Esophagus squamous epithelium (tissue), 5 donors: ENCODE measurements at regions of chr12 and their contacts with region 1.

Region 1: GRCh38 chr12:38324896-38325295 is 8.3 kb downstream of the ALG10B start:
- DNase-seq: no peak
- H3K4me3 ChIP-seq: no peak overlapping the region
- H3K27ac ChIP-seq: no peak overlapping the region
- H3K4me1 ChIP-seq: no peaks in the 10 kb centered on the region
- H3K27me3 ChIP-seq: no peaks in the 10 kb centered on the region
- CTCF ChIP-seq: no peak
- POLR2A ChIP-seq: no peak

Region 2: DNA sequence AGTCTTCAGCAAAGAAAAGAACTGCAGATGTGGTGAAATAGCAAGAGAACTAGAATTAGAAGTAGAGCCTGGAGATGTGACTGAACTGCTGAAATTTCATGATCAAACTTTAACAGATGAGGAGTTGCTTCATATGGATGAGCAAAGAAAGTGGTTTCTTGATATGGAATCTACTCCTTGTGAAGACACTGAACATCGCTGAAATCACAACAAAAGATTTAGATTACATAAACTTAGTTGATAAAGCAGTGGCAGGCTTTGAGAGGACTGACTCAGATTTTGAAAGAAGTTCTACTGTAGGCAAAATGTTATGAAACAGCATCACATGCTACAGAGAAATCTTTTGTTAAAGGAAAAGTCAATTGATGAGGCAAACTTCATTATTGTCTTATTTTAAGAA is 943.0 kb after region 1 on chr12:
- intact Hi-C with region 1: loop called (anchors 10 kb)
- DNase-seq: no peak
- H3K4me3 ChIP-seq: no peak overlapping the region
- H3K27ac ChIP-seq: no peak overlapping the region
- H3K4me1 ChIP-seq: no peaks in the 10 kb centered on the region
- H3K27me3 ChIP-seq: no peaks in the 10 kb centered on the region
- CTCF ChIP-seq: no peak
- POLR2A ChIP-seq: no peak